PC-9 (cell line): ENCODE measurements at regions of chr6 and their contacts with region 1.

Region 1: GRCh38 chr6:141552473-141552878 is 580.2 kb upstream of the GJE1 start:
- DNase-seq: peak; percentile 37 to 93
- H3K4me3 ChIP-seq: peak overlapping the region; percentile 10
- H3K27ac ChIP-seq: peak overlapping the region; percentile 90
- H3K4me1 ChIP-seq: peaks cover 55% of the 10 kb centered on the region
- H3K27me3 ChIP-seq: no peaks in the 10 kb centered on the region
- CTCF ChIP-seq: no peak

Region 2: GRCh38 chr6:141169419-141169818 is 383.1 kb before region 1 on chr6:
- CTCF ChIA-PET with region 1: no interaction called
- POLR2A ChIA-PET with region 1: no interaction called
- intact Hi-C with region 1: loop called (anchors 10 kb)
- DNase-seq: no peak
- H3K4me3 ChIP-seq: no peak overlapping the region
- H3K27ac ChIP-seq: no peak overlapping the region
- H3K4me1 ChIP-seq: no peaks in the 10 kb centered on the region
- H3K27me3 ChIP-seq: no peaks in the 10 kb centered on the region
- CTCF ChIP-seq: no peak

Region 3: DNA sequence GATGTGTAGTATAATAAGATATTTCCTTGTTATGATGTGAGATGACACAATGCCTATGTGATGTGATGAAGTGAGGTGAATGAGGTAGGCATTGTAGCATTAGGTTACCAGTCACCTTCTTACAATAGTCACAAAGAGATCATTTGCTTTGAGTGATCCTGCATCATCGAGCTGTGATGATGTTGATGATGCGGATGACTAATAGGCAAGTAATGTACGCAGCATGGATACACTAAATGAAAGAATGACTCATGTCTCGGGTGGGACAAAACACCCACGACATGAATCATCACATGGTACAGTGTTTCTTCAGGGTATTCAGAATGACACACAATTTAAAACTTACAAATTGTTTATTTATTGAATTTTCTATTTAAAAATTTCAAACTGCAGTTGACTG is 226.1 kb before region 1 on chr6:
- CTCF ChIA-PET with region 1: no interaction called
- POLR2A ChIA-PET with region 1: no interaction called
- intact Hi-C with region 1: loop called (anchors 2 kb)
- DNase-seq: peak; percentile 61 to 95
- H3K4me3 ChIP-seq: peak overlapping the region; percentile 34; the same call in 1 of the 2 replicates
- H3K27ac ChIP-seq: peak overlapping the region; percentile 83
- H3K4me1 ChIP-seq: peaks cover 7% of the 10 kb centered on the region
- H3K27me3 ChIP-seq: no peaks in the 10 kb centered on the region
- CTCF ChIP-seq: no peak

Region 4: GRCh38 chr6:141388666-141389065 is 163.8 kb before region 1 on chr6:
- CTCF ChIA-PET with region 1: no interaction called
- POLR2A ChIA-PET with region 1: interaction called, 4 read pairs
- intact Hi-C with region 1: loop called (anchors 10 kb)
- DNase-seq: no peak
- H3K4me3 ChIP-seq: no peak overlapping the region
- H3K27ac ChIP-seq: no peak overlapping the region
- H3K4me1 ChIP-seq: no peaks in the 10 kb centered on the region
- H3K27me3 ChIP-seq: no peaks in the 10 kb centered on the region
- CTCF ChIP-seq: no peak

Region 5: GRCh38 chr6:141421376-141421775 is 131.1 kb before region 1 on chr6:
- CTCF ChIA-PET with region 1: no interaction called
- POLR2A ChIA-PET with region 1: no interaction called
- intact Hi-C with region 1: loop called (anchors 1 kb)
- DNase-seq: peak; percentile 25 to 64
- H3K4me3 ChIP-seq: no peak overlapping the region
- H3K27ac ChIP-seq: peak overlapping the region; percentile 43; the same call in 1 of the 2 replicates
- H3K4me1 ChIP-seq: peaks cover 5% of the 10 kb centered on the region; the same call in 1 of the 2 replicates
- H3K27me3 ChIP-seq: no peaks in the 10 kb centered on the region
- CTCF ChIP-seq: no peak

Region 6: GRCh38 chr6:142255785-142256184 is 703.3 kb after region 1 on chr6:
- CTCF ChIA-PET with region 1: no interaction called
- POLR2A ChIA-PET with region 1: interaction called, 16 read pairs
- intact Hi-C with region 1: no loop called
- DNase-seq: no peak
- H3K4me3 ChIP-seq: no peak overlapping the region
- H3K27ac ChIP-seq: no peak overlapping the region
- H3K4me1 ChIP-seq: no peaks in the 10 kb centered on the region
- H3K27me3 ChIP-seq: no peaks in the 10 kb centered on the region
- CTCF ChIP-seq: no peak